HCT116 (cell line): ENCODE measurements at regions of chr1 and their contacts with region 1.

Region 1: GRCh38 chr1:37692078-37692833 is at the start of gene CDCA8:
- DNase-seq: peak; percentile 95
- ATAC-seq: peak; percentile 90
- H3K4me3 ChIP-seq: peak within 1 kb of the TSS; percentile 97 to 100
- H3K27ac ChIP-seq: peak within 1 kb of the TSS; percentile 76
- H3K4me1 ChIP-seq: peaks cover 16 to 22% of the 10 kb centered on the region in 2 experiments
- H3K27me3 ChIP-seq: no peaks in the 10 kb centered on the region
- CTCF ChIP-seq: peak in 2 of 3 experiments; percentile 52 to 67; a peak in 4 of 6 replicates
- POLR2A ChIP-seq: peak; percentile 84
- RAD21 ChIP-seq: no peak
- total RNA-seq, gene CDCA8: 51.7 TPM

Region 2: DNA sequence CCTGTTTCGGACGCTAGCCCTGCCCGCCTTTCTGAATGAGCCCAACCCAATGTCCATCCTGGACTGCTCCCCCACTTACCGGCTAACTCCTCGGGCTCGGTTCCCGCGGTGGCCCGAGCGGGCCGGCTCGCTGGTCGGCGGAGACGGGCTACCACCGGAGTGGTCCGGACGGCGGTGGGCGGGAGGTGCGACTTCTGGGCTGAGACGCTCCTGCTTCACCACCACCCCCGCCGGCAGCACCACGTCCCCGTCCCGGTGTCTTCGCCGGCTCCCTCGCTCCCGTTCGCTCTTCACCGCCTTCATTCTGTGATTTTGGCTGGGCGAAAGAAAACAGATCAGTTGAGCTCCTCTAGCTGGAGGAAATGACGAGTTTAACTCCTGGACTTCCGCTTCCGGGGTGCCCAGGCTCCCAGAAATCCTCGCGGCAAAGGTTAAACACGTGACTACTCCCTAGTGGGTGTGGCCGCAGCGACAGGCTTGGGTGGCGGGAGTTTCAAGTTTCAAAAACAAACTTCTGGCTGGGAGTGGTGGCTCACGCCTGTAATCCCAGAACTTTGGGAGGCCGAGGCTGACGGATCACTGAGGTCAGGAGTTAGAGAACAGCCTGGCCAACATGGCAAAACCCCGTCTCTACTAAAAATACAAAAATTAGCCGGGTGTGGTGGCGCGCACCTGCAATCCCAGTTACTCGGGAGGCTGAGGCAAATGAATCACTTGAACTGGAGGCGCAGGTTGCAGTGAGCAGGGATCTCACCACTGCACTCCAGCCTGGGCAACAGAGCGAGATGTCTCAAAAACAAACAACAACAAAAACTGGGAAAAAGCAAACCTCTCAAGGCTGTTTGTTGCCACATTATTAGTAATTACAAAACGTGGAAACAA is 138.1 kb before region 1 on chr1 and contains the start of gene SNIP1:
- CTCF ChIA-PET with region 1: no interaction called
- POLR2A ChIA-PET with region 1: no interaction called
- RAD21 ChIA-PET with region 1: no interaction called
- intact Hi-C with region 1: loop called (anchors 5 kb)
- DNase-seq: peak; percentile 85
- ATAC-seq: peak; percentile 88
- H3K4me3 ChIP-seq: peak within 1 kb of the TSS; percentile 98 to 99
- H3K27ac ChIP-seq: peak within 1 kb of the TSS; percentile 71
- H3K4me1 ChIP-seq: peaks cover 15 to 28% of the 10 kb centered on the region in 2 experiments
- H3K27me3 ChIP-seq: no peaks in the 10 kb centered on the region
- CTCF ChIP-seq: no peak
- POLR2A ChIP-seq: peak; percentile 36
- RAD21 ChIP-seq: no peak
- total RNA-seq, gene SNIP1: 18.8 TPM

Region 3: GRCh38 chr1:37793773-37794371 is 101.6 kb after region 1 on chr1 and contains the start of gene MANEAL:
- CTCF ChIA-PET with region 1: no interaction called
- POLR2A ChIA-PET with region 1: no interaction called
- RAD21 ChIA-PET with region 1: no interaction called
- intact Hi-C with region 1: loop called (anchors 5 kb)
- DNase-seq: peak; percentile 33
- ATAC-seq: peak; percentile 89
- H3K4me3 ChIP-seq: peak within 1 kb of the TSS; percentile 63 to 76
- H3K27ac ChIP-seq: peak within 1 kb of the TSS; percentile 84
- H3K4me1 ChIP-seq: peaks cover 10 to 17% of the 10 kb centered on the region in 2 experiments; a peak in 3 of 4 replicates
- H3K27me3 ChIP-seq: no peaks in the 10 kb centered on the region
- CTCF ChIP-seq: no peak
- POLR2A ChIP-seq: no peak
- RAD21 ChIP-seq: no peak
- total RNA-seq, gene MANEAL: 17.3 TPM

Region 4: DNA sequence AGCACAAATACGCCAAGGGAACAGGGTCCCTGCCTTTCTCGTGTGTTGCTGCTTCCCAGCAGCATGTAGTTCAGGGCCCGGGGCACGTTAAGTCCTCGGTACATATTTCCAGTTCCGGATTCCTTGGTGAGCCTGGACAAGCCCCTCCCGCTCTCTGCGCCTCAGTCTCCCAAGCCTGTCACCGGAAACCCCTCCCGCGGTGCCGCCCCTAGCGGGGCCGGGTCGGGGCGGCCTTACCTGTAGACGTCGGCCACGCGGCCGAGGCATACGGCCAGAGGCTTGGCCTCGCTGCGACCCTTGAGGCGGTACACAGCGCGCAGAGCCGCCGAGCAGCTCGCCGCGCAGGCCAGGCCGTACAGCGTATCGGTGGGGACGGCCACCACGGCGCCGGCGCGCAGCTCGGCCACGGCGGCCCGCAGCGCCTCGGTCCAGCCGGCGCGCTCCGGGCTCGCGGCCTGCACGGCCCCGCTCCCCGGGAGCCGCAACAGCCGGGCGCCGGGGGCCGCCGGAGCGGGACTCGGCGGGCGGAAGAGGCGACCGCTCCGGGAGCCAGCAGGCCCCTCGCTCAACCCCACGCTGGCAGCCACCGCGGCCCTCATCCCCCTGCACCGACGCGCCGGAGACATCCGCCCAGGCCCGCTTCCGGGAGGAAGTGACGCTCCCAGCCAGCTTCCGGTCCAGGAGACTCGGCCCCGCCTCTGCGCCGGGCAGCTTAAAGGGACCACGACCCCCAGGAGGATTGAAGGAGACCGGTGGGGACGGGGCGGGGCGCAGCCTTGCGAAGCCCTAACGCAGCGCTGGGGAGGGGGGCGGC is 115.5 kb after region 1 on chr1 and contains the starts of genes C1orf122 and YRDC:
- CTCF ChIA-PET with region 1: interaction called, 3 read pairs
- POLR2A ChIA-PET with region 1: interaction called, 5 read pairs
- RAD21 ChIA-PET with region 1: no interaction called
- intact Hi-C with region 1: loop called (anchors 1 kb)
- DNase-seq: peak; percentile 77
- ATAC-seq: peak; percentile 84
- H3K4me3 ChIP-seq: peak within 1 kb of the TSS; percentile 78 to 98
- H3K27ac ChIP-seq: peak within 1 kb of the TSS; percentile 93
- H3K4me1 ChIP-seq: peaks cover 16 to 37% of the 10 kb centered on the region in 2 experiments
- H3K27me3 ChIP-seq: no peaks in the 10 kb centered on the region
- CTCF ChIP-seq: no peak
- POLR2A ChIP-seq: peak; percentile 71
- RAD21 ChIP-seq: no peak
- total RNA-seq, gene C1orf122: 34.2 TPM
- total RNA-seq, gene YRDC: 41.4 TPM

Region 5: DNA sequence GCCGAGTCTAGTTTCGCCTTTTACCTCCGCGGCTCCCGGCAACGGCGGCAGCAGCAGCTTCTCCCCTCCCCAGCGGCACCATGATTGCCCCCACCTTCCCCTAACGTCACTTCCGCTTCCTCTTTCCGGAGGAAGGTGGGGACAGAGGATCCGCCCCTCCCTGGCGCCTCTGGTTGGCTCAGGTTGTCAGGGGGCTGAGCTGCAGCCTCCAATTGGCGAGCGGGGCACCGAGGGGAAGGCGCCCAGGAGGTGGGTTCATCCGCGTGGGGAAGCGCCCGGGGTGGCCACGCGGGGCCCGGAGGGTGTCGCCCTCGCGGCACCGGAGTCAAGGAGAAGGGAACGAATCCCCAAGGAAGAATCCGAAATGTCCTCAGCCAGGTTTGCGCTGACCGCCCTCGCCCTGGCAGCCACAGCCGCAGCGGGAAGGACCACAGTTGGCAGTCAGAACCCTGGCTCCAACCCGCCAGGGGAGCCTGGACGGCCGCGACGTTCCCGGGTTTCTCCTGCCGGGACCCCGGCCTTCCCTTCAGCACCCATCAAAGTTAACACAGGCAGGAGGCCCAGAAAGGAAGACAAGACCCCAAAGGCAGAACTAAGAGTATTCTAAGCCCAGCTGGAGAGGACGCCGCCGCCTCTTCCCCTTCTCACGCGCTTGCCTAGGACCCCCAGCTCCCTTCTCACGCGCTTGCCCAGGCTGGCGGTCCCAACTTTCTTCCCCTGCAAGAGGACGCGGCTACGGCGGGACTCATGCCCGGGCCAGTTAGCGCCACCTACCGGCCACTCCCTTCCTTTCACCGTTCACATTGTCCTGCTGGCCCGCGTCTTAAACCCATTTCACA is 167.5 kb after region 1 on chr1 and contains the start of gene MTF1:
- CTCF ChIA-PET with region 1: interaction called, 10 read pairs
- POLR2A ChIA-PET with region 1: no interaction called
- RAD21 ChIA-PET with region 1: no interaction called
- intact Hi-C with region 1: loop called (anchors 2 kb)
- DNase-seq: peak; percentile 93
- ATAC-seq: peak; percentile 97
- H3K4me3 ChIP-seq: peak within 1 kb of the TSS; percentile 94 to 99
- H3K27ac ChIP-seq: peak within 1 kb of the TSS; percentile 85
- H3K4me1 ChIP-seq: peaks cover 11 to 16% of the 10 kb centered on the region in 2 experiments
- H3K27me3 ChIP-seq: no peaks in the 10 kb centered on the region
- CTCF ChIP-seq: peak; percentile 72 to 93 (median 85)
- POLR2A ChIP-seq: no peak
- RAD21 ChIP-seq: peak; percentile 70
- total RNA-seq, gene MTF1: 21.2 TPM

Region 6: DNA sequence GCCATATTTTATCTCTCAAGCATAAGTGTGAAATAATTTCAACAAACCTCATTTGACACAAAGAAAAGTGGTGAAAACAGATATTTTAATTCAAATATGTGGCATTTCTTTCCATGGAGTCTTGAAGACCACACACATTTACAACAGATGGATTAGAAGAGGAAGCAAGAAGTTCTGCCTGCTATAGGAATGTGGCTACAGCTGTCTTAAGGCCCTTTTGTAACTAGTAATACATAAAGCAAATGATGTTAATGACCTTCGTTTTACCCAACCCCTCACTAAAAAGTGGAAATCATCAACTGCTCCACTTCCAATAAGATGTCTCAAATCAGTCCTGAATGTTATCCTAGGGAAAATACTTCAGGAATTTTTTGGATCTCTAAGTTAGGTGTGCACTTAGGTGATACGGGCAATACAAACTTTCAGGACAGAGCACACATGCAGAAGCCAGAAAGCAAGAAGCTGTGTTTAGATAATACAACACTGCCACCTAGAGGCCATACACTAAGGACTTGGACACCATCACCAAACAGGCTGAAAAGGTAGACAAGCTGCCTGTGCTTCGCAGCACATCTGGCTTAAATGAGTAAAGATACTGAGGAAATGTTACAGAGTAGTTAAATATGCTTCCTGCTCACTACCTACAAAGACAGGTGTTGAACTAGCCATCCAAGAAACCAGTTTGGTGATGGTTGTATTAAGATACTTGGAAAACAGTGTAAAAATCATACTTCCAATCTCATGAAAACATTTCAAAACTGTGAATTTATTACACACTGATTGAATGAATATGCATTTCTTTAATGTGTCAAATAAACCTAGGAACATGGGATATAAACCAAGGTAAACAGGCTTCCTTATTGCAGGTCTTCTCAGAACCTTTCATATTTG is 1142.9 kb after region 1 on chr1:
- CTCF ChIA-PET with region 1: no interaction called
- POLR2A ChIA-PET with region 1: no interaction called
- RAD21 ChIA-PET with region 1: no interaction called
- intact Hi-C with region 1: loop called (anchors 10 kb)
- DNase-seq: peak; percentile 81
- ATAC-seq: peak; percentile 97
- H3K4me3 ChIP-seq: no peak overlapping the region
- H3K27ac ChIP-seq: no peak overlapping the region
- H3K4me1 ChIP-seq: no peaks in the 10 kb centered on the region
- H3K27me3 ChIP-seq: no peaks in the 10 kb centered on the region
- CTCF ChIP-seq: peak; percentile 68 to 86 (median 70)
- POLR2A ChIP-seq: no peak
- RAD21 ChIP-seq: peak; percentile 92